A549 (cell line): ENCODE measurements at regions of chr4 and their contacts with region 1.

Region 1: GRCh38 chr4:41214136-41214824 is at the start of gene APBB2:
- DNase-seq: peak; percentile 86 to 95
- ATAC-seq: peak; percentile 80 to 90
- H3K4me3 ChIP-seq: peak within 1 kb of the TSS; percentile 93
- H3K27ac ChIP-seq: peak within 1 kb of the TSS; percentile 93 to 95
- H3K4me1 ChIP-seq: peaks cover 23% of the 10 kb centered on the region; the same call in 2 of the 3 replicates
- CTCF ChIP-seq: peak; percentile 77
- EP300 ChIP-seq: no peak
- POLR2A ChIP-seq: peak; percentile 76
- RAD21 ChIP-seq: peak; percentile 57 to 96
- polyA plus RNA-seq, gene APBB2: 31.3 and 31.9 TPM in 2 replicates

Region 2: DNA sequence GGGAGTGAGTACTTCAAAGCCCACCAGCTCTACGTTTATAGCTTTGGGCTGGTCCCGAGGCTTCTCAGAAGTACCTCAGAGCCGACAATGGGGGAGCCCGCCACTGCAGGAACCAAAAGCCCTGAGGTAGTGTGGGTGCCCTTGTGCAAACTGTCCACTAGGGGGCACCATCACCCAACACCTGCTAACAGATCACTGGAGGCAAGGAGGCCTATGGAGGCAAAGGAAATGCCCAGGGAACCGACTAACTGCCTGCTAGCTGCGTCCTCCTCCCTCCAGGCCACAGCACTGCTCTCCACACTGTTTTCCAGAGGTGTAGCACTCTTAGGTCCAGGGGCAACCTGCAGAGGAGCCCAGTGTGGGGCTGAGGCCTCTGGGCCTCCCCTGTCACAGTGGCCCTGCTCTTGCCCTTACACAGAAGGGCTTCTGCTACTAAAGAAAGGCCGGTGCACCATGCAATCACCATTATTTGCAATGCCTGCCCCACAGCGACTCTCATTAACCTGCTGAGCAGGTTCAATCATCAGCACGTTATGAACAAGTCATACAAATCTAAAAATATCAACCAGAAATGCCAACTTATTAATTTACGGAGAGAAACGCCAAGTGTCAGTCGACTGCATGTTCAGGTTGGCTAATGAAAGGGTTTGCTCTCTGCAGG is 305.4 kb before region 1 on chr4:
- CTCF ChIA-PET with region 1: interaction called, 20 read pairs
- POLR2A ChIA-PET with region 1: interaction called, 5 read pairs
- DNase-seq: peak; percentile 75 to 79
- ATAC-seq: peak; percentile 98 to 99
- H3K4me3 ChIP-seq: no peak overlapping the region
- H3K27ac ChIP-seq: peak overlapping the region in 1 of 2 experiments; percentile 63; a peak in 2 of 6 replicates
- H3K4me1 ChIP-seq: peaks cover 9% of the 10 kb centered on the region; the same call in 2 of the 3 replicates
- CTCF ChIP-seq: peak; percentile 83
- EP300 ChIP-seq: no peak
- POLR2A ChIP-seq: no peak
- RAD21 ChIP-seq: peak; percentile 69 to 74

Region 3: GRCh38 chr4:40976343-40976742 is 237.9 kb before region 1 on chr4:
- CTCF ChIA-PET with region 1: interaction called, 54 read pairs
- POLR2A ChIA-PET with region 1: interaction called, 9 read pairs
- DNase-seq: peak; percentile 14 to 59
- ATAC-seq: peak in 1 of 2 experiments; percentile 63; a peak in 1 of 6 replicates
- H3K4me3 ChIP-seq: no peak overlapping the region
- H3K27ac ChIP-seq: peak overlapping the region in 1 of 2 experiments; percentile 64; a peak in 3 of 6 replicates
- H3K4me1 ChIP-seq: peaks cover 4% of the 10 kb centered on the region; the same call in 2 of the 3 replicates
- CTCF ChIP-seq: peak; percentile 73
- EP300 ChIP-seq: no peak
- POLR2A ChIP-seq: no peak
- RAD21 ChIP-seq: peak; percentile 63 to 70

Region 4: DNA sequence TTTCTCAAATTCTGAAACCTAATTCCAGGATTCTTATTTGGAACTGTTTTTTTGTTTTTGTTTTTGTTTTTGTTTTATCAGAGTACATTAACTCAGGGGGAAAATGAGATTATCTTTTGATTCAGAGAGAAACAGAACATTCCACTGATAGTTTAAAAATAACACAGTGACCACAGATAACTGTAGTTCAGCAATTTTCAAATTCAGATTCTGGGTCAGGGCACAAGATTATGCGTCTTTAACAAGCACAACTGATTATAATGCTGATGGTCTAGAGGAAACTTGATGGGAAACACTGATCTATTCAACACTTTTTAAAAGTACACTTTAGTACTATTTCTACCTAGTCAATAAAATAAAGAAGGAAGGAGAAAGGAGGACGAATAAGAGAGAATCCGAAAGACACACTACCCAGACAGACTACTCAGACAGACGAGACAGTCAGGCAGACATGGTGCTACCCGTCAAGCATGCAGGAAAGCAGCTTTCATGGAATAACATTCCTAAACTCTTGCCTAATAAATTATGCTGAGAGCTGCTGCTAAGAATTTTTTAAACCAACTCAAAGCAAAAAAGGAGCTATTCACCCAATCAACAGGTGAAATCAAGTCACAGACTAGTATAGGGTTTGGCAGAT is 59.0 kb before region 1 on chr4:
- CTCF ChIA-PET with region 1: interaction called, 11 read pairs
- POLR2A ChIA-PET with region 1: no interaction called
- DNase-seq: no peak
- ATAC-seq: peak in 1 of 2 experiments; percentile 55; a peak in 2 of 6 replicates
- H3K4me3 ChIP-seq: no peak overlapping the region
- H3K27ac ChIP-seq: peak overlapping the region in 1 of 2 experiments; percentile 39; a peak in 1 of 6 replicates
- H3K4me1 ChIP-seq: peaks cover 27% of the 10 kb centered on the region
- CTCF ChIP-seq: no peak
- EP300 ChIP-seq: no peak
- POLR2A ChIP-seq: no peak
- RAD21 ChIP-seq: no peak

Region 5: GRCh38 chr4:41257257-41257901 is 43.1 kb after region 1 on chr4:
- CTCF ChIA-PET with region 1: interaction called, 3 read pairs
- POLR2A ChIA-PET with region 1: interaction called, 72 read pairs
- DNase-seq: peak; percentile 24 to 79
- ATAC-seq: peak; percentile 74 to 84
- H3K4me3 ChIP-seq: peak overlapping the region; percentile 99
- H3K27ac ChIP-seq: peak overlapping the region; percentile 99
- H3K4me1 ChIP-seq: peaks cover 33% of the 10 kb centered on the region
- CTCF ChIP-seq: no peak
- EP300 ChIP-seq: no peak
- POLR2A ChIP-seq: no peak
- RAD21 ChIP-seq: no peak